ENCODE measurements at regions of chr14 and their contacts with region 1.

Region 1: GRCh38 chr14:25150934-25151790 is 101.2 kb upstream of the STXBP6 start:
- DNase-seq: no peak
- H3K4me3 ChIP-seq: no peak overlapping the region
- H3K27ac ChIP-seq: no peak overlapping the region
- H3K4me1 ChIP-seq: no peaks in the 10 kb centered on the region
- H3K27me3 ChIP-seq: no peaks in the 10 kb centered on the region
- CTCF ChIP-seq: peak; percentile 77

Region 2: DNA sequence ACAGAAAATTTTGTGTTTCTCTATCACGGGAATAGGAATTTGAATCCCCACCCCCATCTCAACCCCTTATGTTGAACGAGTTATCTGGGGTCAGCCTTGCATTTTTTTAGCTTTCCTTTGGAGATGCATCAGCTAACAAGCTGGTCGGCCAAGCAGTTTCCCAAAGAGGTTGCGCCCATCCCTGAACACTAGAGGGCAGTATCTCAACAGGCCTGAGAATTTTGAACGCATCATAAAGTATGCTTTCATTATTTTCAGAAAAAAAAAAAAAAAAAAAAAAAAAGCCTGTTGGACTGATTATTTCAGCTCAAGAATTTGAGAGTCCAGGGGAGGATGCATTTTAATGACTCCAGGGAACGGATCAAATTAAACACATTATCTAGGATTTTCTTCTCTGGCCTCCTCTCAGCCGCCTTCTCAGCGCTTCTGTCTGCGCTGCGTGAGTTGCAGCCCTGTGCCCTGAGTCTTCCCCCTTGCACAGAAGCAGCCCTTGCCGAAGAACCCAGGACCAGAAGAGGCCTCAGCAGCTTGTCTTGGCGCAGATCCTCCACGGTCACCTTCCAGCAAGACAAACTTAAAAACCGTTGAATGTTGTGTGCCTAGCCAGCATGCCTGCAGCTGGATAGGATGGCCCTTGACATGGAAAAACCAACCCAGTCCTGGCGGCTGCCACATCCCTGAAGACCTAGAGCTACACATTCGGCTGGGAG is 440.6 kb before region 1 on chr14:
- intact Hi-C with region 1: loop called (anchors 5 kb)
- DNase-seq: peak; percentile 59
- H3K4me3 ChIP-seq: no peak overlapping the region
- H3K27ac ChIP-seq: no peak overlapping the region
- H3K4me1 ChIP-seq: no peaks in the 10 kb centered on the region
- H3K27me3 ChIP-seq: no peaks in the 10 kb centered on the region
- CTCF ChIP-seq: peak; percentile 88

Region 3: DNA sequence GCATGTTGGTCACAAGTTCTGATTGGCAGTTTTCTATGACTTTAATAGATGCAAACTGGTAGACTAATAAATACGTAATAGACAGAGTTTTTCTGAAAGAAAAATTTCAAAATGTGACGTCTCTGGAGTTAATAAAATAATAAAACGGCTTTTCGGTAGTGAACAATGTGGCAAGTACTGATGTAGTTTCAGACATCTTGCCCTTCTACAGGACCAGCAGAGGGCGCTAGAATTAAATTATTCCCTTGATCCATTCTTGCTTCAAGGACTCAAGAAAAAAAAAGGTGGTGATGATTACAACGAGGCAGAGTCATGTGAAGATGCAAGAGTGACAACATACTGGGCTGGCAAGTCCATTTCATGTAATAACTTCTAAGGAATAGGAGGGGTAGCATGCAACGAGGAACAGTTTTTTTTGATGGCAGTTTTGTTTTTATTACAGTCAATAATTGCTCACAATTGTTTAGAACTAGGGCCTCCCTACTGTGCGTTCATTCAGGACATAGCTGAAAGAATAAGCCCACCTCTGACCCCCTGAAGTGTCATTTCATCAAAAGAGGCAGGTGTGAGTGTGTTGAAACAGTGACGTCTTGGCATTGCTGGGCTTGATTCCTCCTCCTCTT is 416.2 kb before region 1 on chr14:
- intact Hi-C with region 1: loop called (anchors 5 kb)
- DNase-seq: peak; percentile 71
- H3K4me3 ChIP-seq: no peak overlapping the region
- H3K27ac ChIP-seq: no peak overlapping the region
- H3K4me1 ChIP-seq: no peaks in the 10 kb centered on the region
- H3K27me3 ChIP-seq: no peaks in the 10 kb centered on the region
- CTCF ChIP-seq: peak; percentile 72

Region 4: DNA sequence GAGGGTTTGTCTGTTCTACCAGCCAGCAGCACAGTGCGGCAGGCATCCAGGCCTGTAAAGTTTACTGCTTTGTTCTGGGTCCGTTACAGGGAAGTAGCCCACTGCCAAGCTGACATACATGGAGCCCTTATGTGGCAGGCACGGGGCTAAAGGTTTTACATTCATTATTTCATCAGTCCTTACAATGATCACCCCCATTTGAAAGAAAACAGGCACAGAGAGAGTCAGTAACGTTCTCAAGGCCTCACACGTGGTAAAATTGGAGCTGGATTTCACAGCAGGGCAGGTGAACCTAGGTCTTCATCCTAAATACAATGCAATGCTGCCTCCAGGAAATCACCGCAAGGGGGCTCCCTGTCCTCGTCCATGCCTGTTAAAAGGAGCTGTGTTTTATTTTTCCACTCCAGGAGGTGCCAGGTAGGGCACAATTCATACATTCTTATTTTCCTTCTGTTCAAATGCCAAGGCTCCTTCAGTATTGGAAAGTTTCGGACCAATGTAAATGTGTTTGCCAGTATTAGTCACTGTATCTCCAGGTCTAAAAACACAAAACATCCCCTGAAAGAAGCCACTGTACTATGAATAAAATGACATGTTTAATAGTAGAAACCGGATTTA is 345.0 kb before region 1 on chr14:
- intact Hi-C with region 1: loop called (anchors 5 kb)
- DNase-seq: peak; percentile 91
- H3K4me3 ChIP-seq: no peak overlapping the region
- H3K27ac ChIP-seq: no peak overlapping the region
- H3K4me1 ChIP-seq: peaks cover 4% of the 10 kb centered on the region
- H3K27me3 ChIP-seq: no peaks in the 10 kb centered on the region
- CTCF ChIP-seq: peak; percentile 80

Region 5: GRCh38 chr14:25095736-25096437 is 55.3 kb before region 1 on chr14:
- intact Hi-C with region 1: no loop called
- DNase-seq: peak; percentile 61
- H3K4me3 ChIP-seq: no peak overlapping the region
- H3K27ac ChIP-seq: peak overlapping the region; percentile 9
- H3K4me1 ChIP-seq: no peaks in the 10 kb centered on the region
- H3K27me3 ChIP-seq: no peaks in the 10 kb centered on the region
- CTCF ChIP-seq: no peak

Region 6: GRCh38 chr14:25400607-25401206 is 249.5 kb after region 1 on chr14:
- intact Hi-C with region 1: loop called (anchors 10 kb)
- DNase-seq: peak; percentile 75
- H3K4me3 ChIP-seq: no peak overlapping the region
- H3K27ac ChIP-seq: no peak overlapping the region
- H3K4me1 ChIP-seq: no peaks in the 10 kb centered on the region
- H3K27me3 ChIP-seq: no peaks in the 10 kb centered on the region
- CTCF ChIP-seq: peak; percentile 69

Measured in colonic mucosa (tissue), 4 donors.